ENCODE measurements at regions of chr5 and their contacts with region 1.

Region 1: DNA sequence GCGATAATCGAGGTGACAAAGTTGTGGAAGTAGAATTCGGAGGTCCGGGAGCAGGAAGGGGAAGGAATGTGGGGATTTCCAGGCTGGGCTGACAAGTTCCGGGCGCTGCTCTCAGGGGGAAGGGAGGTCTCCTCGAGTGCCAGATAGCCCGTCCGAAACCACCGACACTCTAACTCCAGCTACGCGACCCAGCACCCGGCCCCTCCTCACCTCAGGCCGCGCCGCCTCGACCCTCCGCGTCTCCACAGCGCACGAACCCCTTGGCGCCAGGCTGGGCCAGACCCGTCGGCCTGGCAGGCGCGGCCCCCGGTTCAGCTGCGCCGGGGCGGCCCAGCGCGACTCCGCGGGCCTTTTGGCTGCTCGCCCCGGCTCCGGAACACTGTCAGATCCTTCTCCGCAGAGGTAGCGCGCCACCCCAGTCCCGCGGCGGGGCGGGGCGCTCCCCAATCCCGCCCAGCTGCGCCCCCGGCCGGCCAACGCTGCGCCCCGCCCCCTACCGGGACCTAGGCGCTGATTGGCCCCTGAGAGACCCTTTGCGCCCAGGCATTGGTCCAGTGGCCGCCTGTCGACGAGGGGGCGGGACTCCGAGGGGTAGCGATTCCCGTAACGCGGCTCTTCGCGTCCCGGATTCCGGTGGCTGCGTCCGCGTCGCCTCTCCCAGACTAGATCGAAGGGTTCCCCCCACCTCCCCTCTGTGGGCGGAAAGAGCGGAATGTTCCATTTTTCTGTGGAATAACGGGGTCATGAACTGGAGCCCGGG is at the start of gene IL6ST:
- DNase-seq: peak; percentile 96
- ATAC-seq: peak; percentile 97
- H3K4me3 Mint-ChIP-seq: peak within 1 kb of the TSS; percentile 95
- H3K27ac Mint-ChIP-seq: peak within 1 kb of the TSS; percentile 95
- H3K4me1 Mint-ChIP-seq: peaks cover 59% of the 10 kb centered on the region
- H3K27me3 Mint-ChIP-seq: no peaks in the 10 kb centered on the region
- total RNA-seq, gene IL6ST: 28.3 to 37.3 TPM

Region 2: GRCh38 chr5:56012281-56012963 is 17.7 kb after region 1 on chr5:
- CTCF ChIA-PET with region 1: interaction called, 14 read pairs
- POLR2A ChIA-PET with region 1: interaction called, 12 read pairs
- DNase-seq: peak; percentile 65
- ATAC-seq: peak; percentile 88
- H3K4me3 Mint-ChIP-seq: peak overlapping the region; percentile 41
- H3K27ac Mint-ChIP-seq: peak overlapping the region; percentile 92
- H3K4me1 Mint-ChIP-seq: peaks cover 26% of the 10 kb centered on the region
- H3K27me3 Mint-ChIP-seq: no peaks in the 10 kb centered on the region

Region 3: GRCh38 chr5:56140073-56140472 is 145.3 kb after region 1 on chr5:
- CTCF ChIA-PET with region 1: no interaction called
- POLR2A ChIA-PET with region 1: no interaction called
- DNase-seq: no peak
- ATAC-seq: no peak
- H3K4me3 Mint-ChIP-seq: no peak overlapping the region
- H3K27ac Mint-ChIP-seq: no peak overlapping the region
- H3K4me1 Mint-ChIP-seq: peaks cover 18% of the 10 kb centered on the region
- H3K27me3 Mint-ChIP-seq: no peaks in the 10 kb centered on the region

Measured in activated CD8-positive, alpha-beta T cell treated with anti-CD3 and anti-CD28 coated beads, Interleukin-2, amount 10 ng/mL, durations not matched to agents 7 days and 5 days (primary cell).